ENCODE measurements at regions of chr12 and their contacts with region 1.

Region 1: GRCh38 chr12:92987362-92987761 is 58.3 kb upstream of the EEA1 start:
- DNase-seq: no peak
- ATAC-seq: peak; percentile 51
- H3K4me3 Mint-ChIP-seq: no peak overlapping the region
- H3K27ac Mint-ChIP-seq: peak overlapping the region; percentile 72
- H3K4me1 Mint-ChIP-seq: peaks cover 26% of the 10 kb centered on the region
- H3K27me3 Mint-ChIP-seq: peaks cover 8% of the 10 kb centered on the region

Region 2: DNA sequence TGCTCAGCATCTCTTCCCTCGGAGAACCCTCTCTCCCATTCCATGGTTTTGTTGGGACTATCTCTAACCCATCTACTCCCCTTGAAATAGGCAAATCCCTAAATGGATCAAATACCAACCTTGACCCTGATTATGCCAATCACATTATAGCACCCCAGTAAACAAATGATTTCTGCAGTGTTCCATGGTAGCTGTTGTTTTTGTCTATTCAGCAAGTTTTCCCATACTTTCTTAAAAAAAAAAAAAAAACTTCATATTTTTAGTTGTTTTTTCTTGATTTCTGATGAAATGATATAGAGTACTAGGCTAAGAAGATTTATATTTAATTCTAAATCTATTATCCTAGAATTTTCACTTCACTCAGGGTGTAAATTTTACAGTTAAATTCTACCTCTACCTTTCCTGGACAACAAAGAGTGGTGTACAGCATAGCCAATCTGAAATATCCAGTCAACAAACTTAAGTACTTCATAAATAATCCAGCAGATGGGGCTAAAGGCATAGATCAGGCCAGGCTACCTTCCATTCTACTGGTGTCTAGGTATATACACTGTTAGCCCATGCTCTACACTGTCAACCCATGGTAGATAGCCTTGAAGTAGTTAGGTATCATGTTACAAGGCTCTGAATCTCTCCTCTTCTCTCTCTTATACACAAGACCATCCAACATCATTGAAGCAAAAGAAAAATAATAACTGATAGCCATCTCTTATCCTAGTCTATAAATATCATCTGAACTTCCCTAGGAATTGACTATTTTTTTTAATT is 202.4 kb before region 1 on chr12:
- CTCF ChIA-PET with region 1: interaction called, 20 read pairs
- DNase-seq: peak; percentile 42
- ATAC-seq: peak; percentile 96
- H3K4me3 Mint-ChIP-seq: no peak overlapping the region
- H3K27ac Mint-ChIP-seq: no peak overlapping the region
- H3K4me1 Mint-ChIP-seq: peaks cover 5% of the 10 kb centered on the region
- H3K27me3 Mint-ChIP-seq: no peaks in the 10 kb centered on the region

Region 3: DNA sequence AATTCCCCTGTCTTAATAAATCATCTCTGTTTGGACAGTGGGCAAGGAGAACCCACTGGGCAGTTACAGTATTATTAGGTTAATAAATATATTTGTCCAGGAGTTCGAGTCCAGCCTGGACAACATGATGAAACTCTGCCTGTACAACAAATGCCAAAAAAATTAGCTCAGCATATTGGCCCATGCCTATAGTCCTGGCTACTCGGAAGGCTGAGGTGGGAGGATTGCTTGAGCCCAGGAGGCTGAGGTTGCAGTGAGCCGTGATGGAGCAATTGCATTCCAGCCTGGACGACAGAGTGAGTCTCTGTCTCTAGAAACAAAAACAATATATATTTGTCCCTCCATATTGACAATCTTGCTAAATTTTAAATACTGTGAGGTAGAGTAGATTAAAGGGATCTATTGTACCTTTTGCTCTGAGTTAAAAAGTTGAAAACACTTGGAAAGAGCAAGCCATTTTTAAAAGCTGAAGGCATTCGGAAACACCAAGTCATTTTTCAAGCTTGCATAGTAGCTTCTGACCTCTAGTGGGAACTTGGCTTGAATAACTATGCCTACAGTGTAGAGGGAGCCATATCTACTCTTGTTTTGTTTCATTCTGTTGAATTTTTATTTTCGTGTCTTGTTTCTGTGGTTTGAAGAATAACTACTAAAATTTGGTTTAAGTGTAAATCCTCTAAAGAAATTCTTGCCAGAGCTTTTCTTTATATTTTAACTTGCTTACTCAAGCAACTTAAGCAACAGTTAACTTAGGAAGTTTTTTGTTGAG is 43.7 kb before region 1 on chr12:
- CTCF ChIA-PET with region 1: no interaction called
- DNase-seq: no peak
- ATAC-seq: no peak
- H3K4me3 Mint-ChIP-seq: no peak overlapping the region
- H3K27ac Mint-ChIP-seq: no peak overlapping the region
- H3K4me1 Mint-ChIP-seq: no peaks in the 10 kb centered on the region
- H3K27me3 Mint-ChIP-seq: no peaks in the 10 kb centered on the region

Region 4: DNA sequence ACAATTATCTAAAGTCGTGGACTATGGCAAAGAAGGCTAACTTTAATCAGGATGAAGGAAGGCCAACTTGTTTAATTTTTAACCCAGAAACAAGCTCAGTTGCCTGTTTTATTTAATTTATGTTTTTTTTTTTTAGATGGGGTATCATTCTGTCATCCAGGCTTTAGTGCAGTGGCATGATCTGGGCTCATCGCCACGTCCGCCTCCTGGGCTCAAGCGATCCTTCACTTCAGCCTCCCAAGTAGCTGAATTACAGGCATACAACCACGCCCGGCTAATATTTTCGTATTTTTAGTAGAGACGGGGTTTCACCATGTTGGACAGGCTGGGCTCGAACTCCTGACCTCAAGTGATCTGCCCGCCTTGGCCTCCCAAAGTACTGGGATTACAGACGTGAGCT is 410.1 kb after region 1 on chr12:
- CTCF ChIA-PET with region 1: interaction called, 33 read pairs
- DNase-seq: no peak
- ATAC-seq: no peak
- H3K4me3 Mint-ChIP-seq: no peak overlapping the region
- H3K27ac Mint-ChIP-seq: no peak overlapping the region
- H3K4me1 Mint-ChIP-seq: peaks cover under 1% of the 10 kb centered on the region
- H3K27me3 Mint-ChIP-seq: no peaks in the 10 kb centered on the region

Measured in activated CD8-positive, alpha-beta memory T cell treated with anti-CD3 and anti-CD28 coated beads, Interleukin-2, amount 10 ng/mL, durations not matched to agents 7 days and 5 days (primary cell).